ENCODE measurements at regions of chr3 and their contacts with region 1.

Region 1: DNA sequence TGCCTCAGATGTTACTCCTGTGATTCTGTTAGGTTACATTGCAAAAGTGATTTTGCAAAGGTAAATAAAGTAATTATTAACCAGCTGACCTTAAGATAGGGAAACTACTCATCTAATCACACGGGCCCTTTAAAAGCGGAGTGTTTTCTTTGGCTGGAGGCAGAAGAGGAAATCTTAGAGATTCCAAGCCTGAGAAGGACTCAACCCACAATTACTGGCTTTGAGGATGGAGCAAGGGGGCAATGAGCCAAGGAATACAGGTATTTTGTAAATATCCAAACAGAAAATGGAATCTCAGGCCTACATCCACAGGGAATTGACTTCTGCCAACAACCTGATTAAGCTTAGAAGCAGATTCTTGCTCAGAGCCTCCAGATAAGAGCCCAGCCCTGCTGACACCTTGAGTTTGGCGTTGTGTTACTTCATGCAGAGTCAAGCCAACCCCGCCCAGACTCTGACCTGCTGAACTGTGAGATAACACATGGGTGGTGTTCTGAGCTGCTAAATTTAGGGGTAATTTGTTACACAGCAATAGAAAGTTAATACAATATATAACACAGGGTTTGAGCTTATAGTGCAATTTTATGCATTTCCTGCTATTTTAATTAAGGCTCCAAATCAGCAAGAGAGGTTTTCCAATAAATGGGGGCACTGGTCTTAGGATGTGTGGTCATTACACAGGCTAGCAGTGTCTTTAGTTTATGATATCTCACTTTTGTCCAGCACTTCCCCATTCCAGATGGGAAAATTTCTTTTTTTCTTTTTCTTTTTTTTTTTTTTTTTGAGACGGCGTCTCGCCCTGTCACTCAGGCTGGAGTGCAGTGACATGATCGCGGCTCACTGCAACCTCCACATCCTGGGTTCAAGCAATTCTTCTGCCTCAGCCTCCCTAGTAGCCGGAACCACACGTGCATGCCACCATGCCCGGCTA is 19.5 kb downstream of the NFKBIZ start:
- DNase-seq: peak; percentile 31 to 73 (median 57)
- ATAC-seq: peak; percentile 78 to 95 (median 87)
- H3K4me3 ChIP-seq: no peak overlapping the region
- H3K27ac ChIP-seq: peak overlapping the region in 1 of 12 donors; percentile 30
- H3K4me1 ChIP-seq: peaks cover 0 to 23% (median 6%) of the 10 kb centered on the region in 12 donors
- H3K27me3 ChIP-seq: no peaks in the 10 kb centered on the region
- CTCF ChIP-seq: no peak
- POLR2A ChIP-seq: no peak

Region 2: GRCh38 chr3:101809178-101810021 is 59.4 kb before region 1 on chr3:
- intact Hi-C with region 1: loop called in 1 of 10 experiments (anchors 10 kb)
- DNase-seq: no peak
- ATAC-seq: peak in 2 of 4 donors; percentile 39 to 51
- H3K4me3 ChIP-seq: no peak overlapping the region
- H3K27ac ChIP-seq: peak overlapping the region in 2 of 12 donors; percentile 31 to 63
- H3K4me1 ChIP-seq: peaks cover 0 to 28% (median 15%) of the 10 kb centered on the region in 12 donors
- H3K27me3 ChIP-seq: no peaks in the 10 kb centered on the region
- CTCF ChIP-seq: peak; percentile 45 to 79 (median 70)
- POLR2A ChIP-seq: no peak

Region 3: GRCh38 chr3:101849051-101849720 is 19.6 kb before region 1 on chr3 and contains the start of gene NFKBIZ:
- intact Hi-C with region 1: loop called in 1 of 10 experiments (anchors 1 kb)
- DNase-seq: peak; percentile 97 to 98 (median 98)
- ATAC-seq: peak; percentile 96 to 99 (median 98)
- H3K4me3 ChIP-seq: peak within 1 kb of the TSS; percentile 77 to 99 (median 89)
- H3K27ac ChIP-seq: peak within 1 kb of the TSS; percentile 96 to 100 (median 99)
- H3K4me1 ChIP-seq: peaks cover 0 to 49% (median 13%) of the 10 kb centered on the region in 12 donors
- H3K27me3 ChIP-seq: no peaks in the 10 kb centered on the region
- CTCF ChIP-seq: no peak
- POLR2A ChIP-seq: peak; percentile 25 to 98
- total RNA-seq, gene NFKBIZ: 6.9 to 44.8 (median 10.0) TPM

Region 4: DNA sequence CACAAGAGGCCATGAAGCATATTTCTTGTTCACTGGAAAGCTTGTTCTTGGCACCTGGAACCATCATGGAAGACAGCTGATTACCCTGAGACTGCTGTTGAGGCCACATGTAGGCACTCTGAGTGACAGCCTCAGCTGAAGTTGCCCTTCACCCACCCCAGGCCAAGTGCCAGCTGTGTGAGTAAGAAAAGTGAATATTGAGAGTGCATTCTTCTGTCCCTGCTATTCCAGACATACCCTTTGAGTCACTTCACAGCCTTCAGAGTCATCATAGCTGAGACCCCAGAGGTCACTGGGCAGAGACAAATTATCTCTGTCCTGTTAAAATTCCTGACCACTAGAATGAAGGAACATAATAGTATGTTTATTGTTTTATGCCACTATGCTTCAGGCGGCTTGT is 60.1 kb after region 1 on chr3:
- intact Hi-C with region 1: loop called in 1 of 10 experiments (anchors 10 kb)
- DNase-seq: no peak
- ATAC-seq: no peak
- H3K4me3 ChIP-seq: no peak overlapping the region
- H3K27ac ChIP-seq: no peak overlapping the region
- H3K4me1 ChIP-seq: peaks cover 0 to 7% (median 0%) of the 10 kb centered on the region in 12 donors
- H3K27me3 ChIP-seq: no peaks in the 10 kb centered on the region
- CTCF ChIP-seq: no peak
- POLR2A ChIP-seq: no peak

Region 5: GRCh38 chr3:102106416-102107097 is 237.8 kb after region 1 on chr3:
- intact Hi-C with region 1: loop called in 1 of 10 experiments (anchors 10 kb)
- DNase-seq: no peak
- ATAC-seq: no peak
- H3K4me3 ChIP-seq: no peak overlapping the region
- H3K27ac ChIP-seq: no peak overlapping the region
- H3K4me1 ChIP-seq: no peaks in the 10 kb centered on the region
- H3K27me3 ChIP-seq: no peaks in the 10 kb centered on the region
- CTCF ChIP-seq: no peak
- POLR2A ChIP-seq: no peak

Measured in heart left ventricle (tissue), 16 donors.